Activated CD4-positive, alpha-beta memory T cell treated with anti-CD3 and anti-CD28 coated beads for 36 hours (primary cell): ENCODE measurements at regions of chr12 and their contacts with region 1.

Region 1: GRCh38 chr12:101697197-101697929 is at the start of gene CHPT1:
- DNase-seq: peak; percentile 74
- H3K4me3 Mint-ChIP-seq: peak within 1 kb of the TSS; percentile 88
- H3K27ac Mint-ChIP-seq: peak within 1 kb of the TSS; percentile 61
- H3K4me1 Mint-ChIP-seq: peaks cover 39% of the 10 kb centered on the region
- H3K27me3 Mint-ChIP-seq: no peaks in the 10 kb centered on the region
- total RNA-seq, gene CHPT1: 20.6 to 23.0 TPM

Region 2: DNA sequence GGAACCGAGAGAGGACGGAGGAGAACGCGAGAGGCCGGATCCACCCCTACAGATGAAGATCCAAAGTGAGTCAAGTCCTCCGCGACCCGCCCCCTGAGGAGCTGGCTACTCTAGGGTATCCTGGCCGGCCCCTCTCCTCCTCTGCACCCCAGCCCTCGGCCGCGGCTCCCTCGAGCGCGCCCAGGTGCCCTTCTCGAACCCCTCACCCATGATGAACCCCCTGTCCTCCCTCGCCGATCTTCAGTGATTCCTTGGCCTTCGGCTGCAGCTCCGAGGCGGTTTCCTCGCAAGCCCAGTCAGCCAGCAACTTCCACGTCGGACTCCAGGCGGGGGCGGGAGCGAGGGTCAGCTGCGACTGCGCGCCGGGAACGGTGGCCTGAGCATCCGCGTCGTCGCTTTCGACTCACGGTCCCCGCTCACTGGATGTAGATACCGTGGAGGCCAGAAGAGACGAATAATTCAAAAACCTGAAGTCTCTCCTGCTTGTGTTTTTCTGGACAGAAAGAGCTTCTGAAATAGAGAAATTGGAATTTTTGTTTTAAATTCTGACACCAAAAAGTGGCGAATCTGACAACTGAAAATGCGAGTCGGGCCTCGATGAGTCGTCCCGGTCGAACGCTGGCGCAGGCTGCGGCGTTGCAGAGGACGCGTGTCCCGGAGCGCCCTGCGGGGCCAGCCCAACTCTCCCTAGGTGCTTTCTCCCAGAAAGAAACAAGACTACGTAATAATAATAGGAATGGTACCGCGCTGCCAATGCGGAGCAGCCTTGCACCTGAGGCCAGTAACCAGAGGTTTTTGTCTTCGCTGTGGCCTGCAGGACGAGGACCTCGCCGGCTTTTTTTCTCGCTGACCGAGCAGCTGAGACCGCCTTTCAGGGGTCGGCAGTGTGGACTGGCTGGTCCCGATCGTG is 289.7 kb before region 1 on chr12 and contains the start of gene ARL1:
- CTCF ChIA-PET with region 1: no interaction called
- POLR2A ChIA-PET with region 1: no interaction called
- intact Hi-C with region 1: loop called (anchors 2 kb)
- DNase-seq: peak; percentile 86
- H3K4me3 Mint-ChIP-seq: peak within 1 kb of the TSS; percentile 99
- H3K27ac Mint-ChIP-seq: peak within 1 kb of the TSS; percentile 94
- H3K4me1 Mint-ChIP-seq: peaks cover 22% of the 10 kb centered on the region
- H3K27me3 Mint-ChIP-seq: no peaks in the 10 kb centered on the region
- total RNA-seq, gene ARL1: 63.2 to 64.1 TPM

Region 3: DNA sequence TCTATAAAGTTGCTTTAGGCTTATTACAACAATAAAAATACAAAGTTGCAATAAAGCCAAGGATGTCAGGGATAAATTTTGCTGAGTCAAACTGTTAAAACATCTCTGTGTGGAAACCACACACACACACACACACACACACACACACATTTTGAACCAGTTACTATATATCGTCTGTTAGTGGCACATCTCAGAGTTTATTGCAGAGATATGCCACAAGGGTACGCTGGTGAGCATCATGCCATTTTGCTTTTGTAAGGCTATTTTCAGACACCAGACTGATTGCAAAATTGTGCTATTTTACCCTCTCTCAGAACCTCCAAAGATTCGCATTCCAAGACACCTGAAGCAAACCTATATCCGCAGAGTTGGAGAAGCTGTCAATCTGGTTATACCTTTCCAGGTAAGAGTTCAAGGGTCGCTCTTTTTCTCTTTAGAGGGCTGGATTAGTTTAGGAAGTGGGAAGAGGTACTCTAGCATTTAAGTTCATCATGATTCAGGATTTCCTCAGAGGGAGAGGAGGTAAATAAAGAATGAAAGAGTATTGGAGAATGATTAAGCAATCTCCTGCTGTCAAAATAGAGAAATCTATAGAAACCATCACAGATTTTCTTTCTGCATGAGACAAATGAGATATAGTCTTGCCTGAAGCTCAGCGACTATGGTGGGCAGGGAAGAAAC is 27.2 kb before region 1 on chr12:
- CTCF ChIA-PET with region 1: no interaction called
- POLR2A ChIA-PET with region 1: no interaction called
- intact Hi-C with region 1: loop called (anchors 1 kb)
- DNase-seq: peak; percentile 64
- H3K4me3 Mint-ChIP-seq: no peak overlapping the region
- H3K27ac Mint-ChIP-seq: no peak overlapping the region
- H3K4me1 Mint-ChIP-seq: peaks cover 17% of the 10 kb centered on the region
- H3K27me3 Mint-ChIP-seq: peaks cover 9% of the 10 kb centered on the region

Region 4: DNA sequence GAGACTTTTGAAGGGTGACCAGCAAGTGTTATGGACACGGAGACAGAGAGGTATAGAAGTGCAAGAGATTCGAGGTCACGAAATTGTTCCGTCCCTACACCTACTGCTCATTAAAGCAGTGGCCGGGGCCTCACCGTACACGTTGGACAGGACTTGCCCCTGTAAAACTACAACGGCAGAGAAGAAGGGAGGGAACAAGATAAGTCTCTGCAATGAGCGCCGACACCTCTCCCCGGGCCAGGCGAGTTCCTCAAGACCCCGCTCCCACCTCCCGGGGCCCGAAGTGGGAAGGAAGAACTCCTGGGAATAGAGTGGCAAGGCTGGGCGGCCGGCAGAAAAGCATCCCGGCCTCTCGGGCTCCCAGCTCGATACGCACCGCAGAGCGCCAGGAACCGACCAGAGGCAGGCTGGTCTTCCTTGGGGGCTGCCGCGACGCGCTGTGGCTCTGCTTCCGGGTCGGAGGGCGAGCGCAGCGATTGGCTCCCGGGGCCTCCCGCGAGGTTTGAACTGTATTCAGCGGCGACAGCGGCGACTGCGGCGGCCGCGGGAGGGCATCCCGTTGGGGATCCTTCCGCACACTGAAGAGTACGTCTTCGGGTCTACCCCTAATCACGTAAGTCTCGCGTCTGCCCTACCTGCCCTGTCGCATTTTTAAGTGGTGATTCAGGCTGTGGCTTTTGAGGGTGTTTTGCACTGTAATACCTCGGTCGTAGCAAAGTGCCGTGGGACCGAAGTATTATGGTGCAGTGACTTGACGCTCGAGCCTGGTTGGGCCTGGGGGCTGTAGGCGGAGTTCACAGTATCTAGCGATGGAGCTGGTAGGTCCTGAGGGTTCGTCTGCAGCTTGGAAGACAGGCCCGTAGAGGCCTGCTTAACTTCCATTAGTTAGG is 422.6 kb after region 1 on chr12 and contains the starts of genes NUP37 and PARPBP:
- CTCF ChIA-PET with region 1: no interaction called
- POLR2A ChIA-PET with region 1: no interaction called
- intact Hi-C with region 1: loop called (anchors 5 kb)
- DNase-seq: peak; percentile 95
- H3K4me3 Mint-ChIP-seq: peak within 1 kb of the TSS; percentile 87
- H3K27ac Mint-ChIP-seq: peak within 1 kb of the TSS; percentile 82
- H3K4me1 Mint-ChIP-seq: peaks cover 19% of the 10 kb centered on the region
- H3K27me3 Mint-ChIP-seq: no peaks in the 10 kb centered on the region
- total RNA-seq, gene NUP37: 86.8 to 89.5 TPM
- total RNA-seq, gene PARPBP: 24.0 to 25.9 TPM